ENCODE measurements at regions of chr14 and their contacts with region 1.

Region 1: DNA sequence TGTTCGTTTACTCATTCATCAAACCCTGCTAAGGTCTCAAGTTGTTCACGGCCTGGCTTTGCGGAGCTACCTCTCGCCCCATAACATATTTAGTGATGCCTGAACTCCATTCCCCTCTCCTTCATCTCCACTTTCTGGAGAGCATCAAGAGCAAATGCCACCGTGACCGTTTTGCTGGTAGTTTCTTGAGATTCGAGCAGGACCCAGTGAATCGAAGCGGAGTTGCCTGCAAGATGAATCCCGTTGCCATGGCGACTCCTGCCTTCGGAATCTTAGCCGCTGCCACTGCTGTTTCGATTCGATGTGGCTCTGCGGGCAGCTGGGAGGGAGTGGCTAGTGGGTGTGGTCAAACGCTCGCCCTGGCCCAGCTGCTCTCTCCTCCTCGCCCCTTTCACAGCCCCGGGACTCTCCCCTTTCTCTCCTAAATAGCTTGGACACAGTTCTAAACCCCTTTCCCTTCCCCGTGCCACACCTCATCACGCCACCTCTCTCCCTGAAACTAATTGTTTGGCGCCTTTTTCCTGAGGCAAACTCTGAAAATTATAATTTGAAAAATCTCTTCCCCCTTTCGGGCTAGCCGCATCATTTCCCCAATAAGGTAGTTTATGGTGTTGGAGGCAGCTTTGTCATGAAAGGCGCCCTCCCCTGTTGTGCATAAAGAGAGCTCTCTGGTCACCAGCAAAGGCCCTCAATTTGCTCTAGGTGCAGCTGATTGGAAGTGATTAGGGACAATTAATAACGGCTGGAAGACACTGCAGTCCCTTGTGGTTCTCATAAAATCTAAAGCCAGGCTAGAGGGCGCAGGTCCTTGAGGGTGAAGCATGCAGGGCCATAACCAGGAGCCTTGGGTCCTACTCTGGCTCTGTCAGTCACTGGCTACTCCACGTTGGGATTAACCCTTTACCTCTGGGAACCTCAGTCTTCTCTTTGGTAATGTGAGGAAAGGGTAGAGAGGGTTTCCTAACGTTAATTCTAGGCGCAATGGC is 1.6 kb downstream of the DAAM1 start:
- DNase-seq: peak; percentile 69
- ATAC-seq: peak; percentile 58
- H3K4me3 ChIP-seq: peak overlapping the region; percentile 79
- H3K27ac ChIP-seq: no peak overlapping the region
- H3K4me1 ChIP-seq: peaks cover 15 to 31% of the 10 kb centered on the region in 2 experiments; a peak in 3 of 4 replicates
- H3K27me3 ChIP-seq: peaks cover 23% of the 10 kb centered on the region
- CTCF ChIP-seq: peak in 2 of 3 experiments; percentile 5 to 15; a peak in 1 of 6 replicates
- POLR2A ChIP-seq: no peak
- RAD21 ChIP-seq: peak; percentile 23; the same call in 1 of the 2 replicates

Region 2: DNA sequence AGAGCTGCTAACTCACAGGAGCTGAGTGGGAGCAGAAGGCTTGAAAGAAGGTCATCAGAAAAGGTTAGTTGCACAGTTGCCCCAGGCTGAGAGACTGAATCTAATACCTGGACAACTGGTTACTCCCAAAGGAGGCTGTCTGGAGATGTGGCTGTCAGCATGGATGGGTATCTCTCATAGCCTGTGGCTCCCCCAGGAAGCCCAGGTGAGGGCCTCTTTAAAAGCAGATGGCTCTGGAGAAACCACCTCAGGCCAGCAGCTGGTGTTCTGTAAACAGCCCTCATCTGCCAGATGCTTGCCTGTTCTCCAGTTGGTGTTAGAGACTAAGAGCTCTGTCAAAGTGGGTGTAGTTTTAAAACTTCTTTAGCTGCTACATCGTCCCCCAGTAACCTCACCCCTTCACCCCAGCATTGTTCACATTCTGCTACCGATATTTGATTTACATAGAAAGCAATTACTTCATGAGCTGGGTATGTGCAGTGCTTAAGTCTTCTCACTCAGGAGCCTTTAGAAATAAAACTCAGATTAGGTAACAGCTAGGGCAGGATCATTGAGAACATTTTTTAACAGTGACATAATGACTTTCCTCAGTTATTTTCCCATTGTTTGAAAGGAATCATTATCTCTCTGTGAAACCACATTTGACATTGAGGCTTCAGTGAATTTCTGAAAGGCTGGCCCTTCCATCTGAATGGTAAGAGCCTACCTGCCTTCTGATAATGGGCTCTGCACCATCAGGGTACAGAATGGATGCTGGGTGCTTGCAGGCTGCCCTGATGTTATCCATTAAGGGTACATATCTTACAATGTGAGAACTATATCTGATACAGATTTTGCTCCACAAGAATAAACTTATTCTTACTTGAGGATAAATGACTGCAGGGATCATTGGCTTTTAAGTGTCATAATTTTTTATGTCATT is 526.3 kb before region 1 on chr14:
- CTCF ChIA-PET with region 1: no interaction called
- POLR2A ChIA-PET with region 1: no interaction called
- RAD21 ChIA-PET with region 1: no interaction called
- intact Hi-C with region 1: no loop called
- DNase-seq: no peak
- ATAC-seq: no peak
- H3K4me3 ChIP-seq: no peak overlapping the region
- H3K27ac ChIP-seq: no peak overlapping the region
- H3K4me1 ChIP-seq: no peaks in the 10 kb centered on the region
- H3K27me3 ChIP-seq: no peaks in the 10 kb centered on the region
- CTCF ChIP-seq: no peak
- POLR2A ChIP-seq: no peak
- RAD21 ChIP-seq: no peak

Region 3: DNA sequence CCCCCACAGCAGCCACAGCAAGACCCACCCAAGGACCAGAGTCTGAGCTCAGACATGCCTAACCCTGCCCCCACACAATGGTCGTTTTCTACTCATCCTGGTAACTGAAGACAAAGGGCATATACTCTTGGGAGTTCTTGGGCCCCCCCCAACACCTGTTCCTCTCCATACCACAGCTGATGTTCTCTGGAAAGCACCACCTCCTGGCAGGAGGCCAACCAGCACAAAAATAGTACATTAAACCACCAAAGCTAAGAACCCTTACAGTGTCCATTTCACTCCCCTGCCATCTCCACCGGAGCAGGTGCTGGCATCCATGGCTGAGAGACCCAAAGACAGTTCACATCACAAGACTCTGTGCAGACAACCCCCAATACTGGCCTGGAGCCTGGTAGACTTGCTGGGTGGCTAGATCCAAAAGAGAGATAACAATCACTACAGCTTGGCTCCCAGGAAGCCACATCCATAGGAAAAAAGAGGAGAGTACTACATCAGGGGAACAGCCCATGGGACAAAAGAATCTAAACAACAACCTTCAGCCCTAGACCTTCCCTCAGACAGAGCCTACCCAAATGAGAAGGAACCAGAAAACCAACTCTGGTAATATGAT is 82.2 kb before region 1 on chr14:
- CTCF ChIA-PET with region 1: no interaction called
- POLR2A ChIA-PET with region 1: no interaction called
- RAD21 ChIA-PET with region 1: no interaction called
- intact Hi-C with region 1: no loop called
- DNase-seq: no peak
- ATAC-seq: no peak
- H3K4me3 ChIP-seq: no peak overlapping the region
- H3K27ac ChIP-seq: no peak overlapping the region
- H3K4me1 ChIP-seq: no peaks in the 10 kb centered on the region
- H3K27me3 ChIP-seq: no peaks in the 10 kb centered on the region
- CTCF ChIP-seq: no peak
- POLR2A ChIP-seq: no peak
- RAD21 ChIP-seq: no peak

Region 4: GRCh38 chr14:59275653-59276052 is 85.6 kb after region 1 on chr14:
- CTCF ChIA-PET with region 1: interaction called, 3 read pairs
- POLR2A ChIA-PET with region 1: interaction called, 3 read pairs
- RAD21 ChIA-PET with region 1: no interaction called
- intact Hi-C with region 1: loop called (anchors 5 kb)
- DNase-seq: peak; percentile 75
- ATAC-seq: peak; percentile 75
- H3K4me3 ChIP-seq: peak overlapping the region in 1 of 2 experiments; percentile 21; a peak in 1 of 4 replicates
- H3K27ac ChIP-seq: peak overlapping the region; percentile 64; the same call in 1 of the 2 replicates
- H3K4me1 ChIP-seq: peaks cover 46 to 57% of the 10 kb centered on the region in 2 experiments
- H3K27me3 ChIP-seq: no peaks in the 10 kb centered on the region
- CTCF ChIP-seq: no peak
- POLR2A ChIP-seq: no peak
- RAD21 ChIP-seq: no peak

Region 5: DNA sequence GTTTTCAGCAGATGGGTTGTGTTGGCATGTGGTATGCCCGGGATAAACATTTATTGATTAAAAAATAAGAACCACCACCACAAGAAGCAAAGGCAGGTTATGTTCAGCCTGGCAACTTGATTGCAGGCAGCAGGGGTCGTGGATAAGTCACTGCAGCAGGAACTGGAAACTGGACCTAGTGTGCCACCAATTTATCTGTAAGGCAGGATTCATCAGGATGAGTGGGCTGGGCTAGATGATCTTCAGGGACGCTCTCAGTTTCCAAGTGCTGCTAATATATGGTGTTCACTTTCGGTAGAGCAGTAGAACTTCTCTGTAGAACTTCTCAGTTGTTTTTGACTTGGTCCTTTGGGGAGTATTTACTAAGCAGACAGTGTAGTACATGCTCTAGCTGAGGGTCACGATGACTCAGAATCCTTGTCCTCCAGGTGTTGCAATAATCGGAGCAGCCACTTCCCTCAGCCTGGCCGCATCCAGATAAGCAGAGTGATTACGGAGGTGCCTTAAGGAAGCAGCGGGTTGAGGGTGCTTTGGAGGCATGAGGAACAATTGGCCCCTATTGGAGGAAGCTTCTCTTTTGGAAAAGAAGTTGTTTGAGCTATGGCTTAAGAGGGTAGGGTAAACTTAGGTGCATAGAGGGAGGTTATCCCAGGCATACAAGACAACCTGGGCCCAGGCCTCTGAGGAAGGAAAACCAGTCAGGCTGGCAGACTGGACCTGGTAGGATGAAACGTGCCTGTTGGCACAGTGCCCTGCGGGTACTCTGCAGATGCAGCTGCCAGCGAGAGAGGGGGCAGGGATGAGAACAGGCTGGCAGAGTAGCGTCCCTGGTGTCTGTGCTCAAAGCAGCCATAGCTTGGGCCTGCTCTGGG is 171.1 kb after region 1 on chr14:
- CTCF ChIA-PET with region 1: no interaction called
- POLR2A ChIA-PET with region 1: no interaction called
- RAD21 ChIA-PET with region 1: interaction called in 1 of 2 experiments, 3 read pairs
- intact Hi-C with region 1: loop called (anchors 5 kb)
- DNase-seq: peak; percentile 86
- ATAC-seq: peak; percentile 93
- H3K4me3 ChIP-seq: peak overlapping the region in 1 of 2 experiments; percentile 30; a peak in 2 of 4 replicates
- H3K27ac ChIP-seq: peak overlapping the region; percentile 79
- H3K4me1 ChIP-seq: peaks cover 54 to 69% of the 10 kb centered on the region in 2 experiments
- H3K27me3 ChIP-seq: no peaks in the 10 kb centered on the region
- CTCF ChIP-seq: no peak
- POLR2A ChIP-seq: no peak
- RAD21 ChIP-seq: 0 out of 2 replicates have a peak, but pooled peaks have one; percentile 22

Region 6: DNA sequence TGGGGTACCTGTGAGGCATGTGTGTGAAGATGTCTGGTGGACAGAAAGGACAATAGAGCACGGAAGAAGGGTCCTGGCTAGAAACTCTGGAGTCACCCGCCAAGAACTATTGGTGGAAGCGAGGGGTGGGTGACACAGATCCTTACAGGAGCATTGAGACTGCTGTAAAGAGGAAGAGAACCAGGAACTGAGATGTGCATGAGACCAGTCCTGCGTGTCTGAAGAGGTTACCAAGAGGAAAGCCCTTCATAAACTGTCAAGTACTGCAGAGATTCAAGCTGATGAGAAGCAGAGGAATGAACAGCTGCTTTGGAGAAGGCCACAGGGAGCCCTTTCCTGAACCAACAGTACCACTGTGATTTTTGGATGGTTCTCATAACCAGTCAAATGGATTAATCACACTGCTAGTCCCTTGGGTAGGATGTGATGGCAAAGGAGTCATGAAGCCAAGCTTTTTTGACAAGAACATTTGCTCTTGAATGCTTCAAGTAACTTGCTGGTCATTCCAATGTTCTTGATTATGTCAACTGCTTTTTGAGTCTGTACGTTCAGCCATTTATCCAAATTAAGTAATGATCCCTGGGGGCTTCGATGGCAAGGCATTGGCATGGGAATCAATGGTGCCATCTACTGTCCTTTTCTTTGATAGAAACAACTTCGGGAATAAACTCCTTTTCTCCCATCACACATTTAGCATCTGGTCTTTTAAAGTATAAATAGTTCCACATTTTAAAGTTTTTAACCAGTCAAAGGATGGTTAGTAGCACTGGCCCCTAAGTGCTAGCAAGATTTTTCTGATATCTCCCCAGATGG is 232.2 kb after region 1 on chr14:
- CTCF ChIA-PET with region 1: no interaction called
- POLR2A ChIA-PET with region 1: no interaction called
- RAD21 ChIA-PET with region 1: no interaction called
- intact Hi-C with region 1: loop called (anchors 5 kb)
- DNase-seq: no peak
- ATAC-seq: no peak; the same call in 1 of the 2 replicates
- H3K4me3 ChIP-seq: no peak overlapping the region
- H3K27ac ChIP-seq: no peak overlapping the region
- H3K4me1 ChIP-seq: no peaks in the 10 kb centered on the region
- H3K27me3 ChIP-seq: no peaks in the 10 kb centered on the region
- CTCF ChIP-seq: peak; percentile 4 to 37 (median 30); a peak in 2 of 6 replicates
- POLR2A ChIP-seq: no peak
- RAD21 ChIP-seq: peak; percentile 72